ENCODE measurements at regions of chr11 and their contacts with region 1.

Region 1: DNA sequence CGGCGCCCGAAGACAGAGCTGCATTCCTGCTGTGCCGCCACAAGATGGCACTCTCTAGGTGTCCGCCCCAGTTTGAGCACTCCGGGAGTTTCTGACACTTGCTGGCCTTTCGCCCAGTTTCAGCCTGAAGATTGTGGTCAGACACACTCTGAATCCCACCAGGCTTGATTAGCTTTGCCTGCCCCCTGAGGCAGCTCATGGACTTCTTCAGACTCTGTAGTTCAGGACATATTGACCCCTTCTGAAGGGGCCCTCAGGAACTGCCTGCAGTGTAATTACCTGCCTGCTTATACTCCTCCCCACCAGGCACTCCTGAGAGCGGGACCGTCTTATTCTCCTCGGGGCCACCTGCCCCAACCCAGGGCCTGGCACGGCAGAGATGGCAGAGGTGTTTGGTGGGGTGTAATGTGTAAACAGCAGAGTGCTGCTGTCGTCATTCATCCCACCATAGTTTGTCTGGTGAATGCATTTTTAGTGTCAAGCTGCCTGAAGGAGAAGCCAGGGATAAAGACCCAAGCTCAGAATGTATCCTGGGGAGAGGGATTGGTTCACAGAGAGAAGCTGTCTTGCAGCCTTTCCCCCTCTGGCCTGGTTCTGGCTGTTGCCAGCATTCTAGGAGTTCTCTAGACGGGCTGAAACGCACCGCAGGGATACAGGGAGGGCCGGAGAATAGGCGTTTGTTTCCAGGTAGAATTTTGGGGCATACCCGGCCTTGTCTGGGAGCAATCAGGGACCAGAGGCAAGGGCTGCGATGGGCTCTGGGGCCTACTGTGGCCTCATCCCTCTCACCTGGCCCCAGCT is 46.4 kb downstream of the EIF3F start:
- DNase-seq: peak; percentile 87
- CTCF ChIP-seq: peak; percentile 85

Region 2: DNA sequence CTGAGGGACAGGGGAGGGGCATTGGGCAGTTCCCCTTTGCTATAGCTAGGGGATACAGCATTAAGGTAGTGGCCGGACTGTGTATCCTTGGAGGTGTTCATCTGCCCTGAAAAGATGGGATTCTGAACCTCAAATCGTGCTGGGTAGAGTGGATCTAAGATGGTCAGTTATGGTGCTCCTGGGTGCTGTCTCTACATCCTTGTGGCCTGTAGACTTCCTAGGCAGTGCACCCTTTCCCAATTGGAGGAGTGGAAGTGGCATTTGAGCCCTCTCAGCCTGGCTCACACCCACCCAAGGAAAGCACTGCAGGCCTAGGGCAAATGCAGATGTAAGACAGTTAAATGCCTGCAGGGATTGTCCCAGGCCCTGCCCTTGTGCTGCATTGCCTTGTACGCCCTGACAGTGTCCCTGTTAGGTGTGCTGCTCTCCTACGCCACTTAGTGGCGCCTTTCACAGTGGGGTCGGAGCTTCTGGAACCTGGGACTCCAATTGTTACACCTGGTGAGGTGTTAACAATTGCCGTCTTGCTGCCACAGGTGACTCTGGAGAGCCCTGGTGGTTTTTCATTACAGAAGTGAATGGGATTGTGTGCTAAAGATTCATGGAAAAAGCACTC is 484.7 kb before region 1 on chr11:
- CTCF ChIA-PET with region 1: no interaction called
- POLR2A ChIA-PET with region 1: no interaction called
- DNase-seq: peak; percentile 58
- CTCF ChIP-seq: peak; percentile 71

Region 3: DNA sequence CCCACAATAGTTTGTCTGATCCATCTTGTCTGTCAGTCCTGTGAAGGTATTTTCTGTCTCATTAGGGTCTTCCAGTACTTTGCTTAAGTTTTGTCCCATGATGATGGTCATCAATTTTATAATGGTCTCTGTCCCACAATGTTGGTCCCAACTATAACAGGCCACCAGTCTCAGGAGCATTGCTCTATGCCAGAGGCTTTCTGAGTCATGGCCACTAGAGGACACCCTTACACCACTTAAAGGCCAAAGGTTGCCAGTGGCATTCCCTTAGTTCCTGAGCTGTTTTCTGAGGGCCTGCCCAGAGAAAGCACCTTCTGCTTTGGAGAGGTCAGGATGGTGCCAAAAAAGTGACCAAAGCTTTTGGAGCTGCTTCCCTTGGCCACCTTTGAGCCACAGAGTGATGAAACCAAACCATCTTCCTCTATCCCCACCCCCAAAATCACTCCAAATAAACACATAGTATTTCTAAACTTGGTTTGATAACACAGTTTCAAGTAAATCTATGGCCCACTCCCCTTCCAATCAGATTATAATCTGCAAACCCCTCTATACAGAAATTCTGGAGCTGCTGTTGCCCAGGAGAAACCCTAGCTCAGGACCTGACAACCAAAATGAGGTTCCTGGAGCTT is 27.0 kb before region 1 on chr11:
- CTCF ChIA-PET with region 1: interaction called, 51 read pairs
- POLR2A ChIA-PET with region 1: no interaction called
- DNase-seq: peak; percentile 58
- CTCF ChIP-seq: peak; percentile 88

Region 4: DNA sequence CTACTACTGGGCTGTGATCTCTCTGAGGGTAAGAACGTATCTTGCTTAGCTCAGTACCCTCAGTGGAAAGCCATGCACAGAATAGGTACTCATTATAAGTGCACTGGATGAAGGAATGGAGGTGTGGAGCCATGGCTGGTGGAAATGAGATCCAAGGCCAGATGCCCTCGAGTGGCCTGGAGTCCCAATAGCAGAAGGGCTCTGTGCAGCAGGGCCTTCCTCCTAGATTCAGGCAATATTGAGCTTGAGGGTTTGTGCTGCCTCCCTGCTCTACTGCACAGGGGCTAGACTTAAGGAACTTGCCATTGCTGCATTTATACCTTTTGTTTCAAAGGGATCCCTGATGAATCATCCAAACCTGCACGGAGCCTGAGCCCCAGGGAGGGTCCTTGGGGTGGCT is 13.9 kb after region 1 on chr11:
- CTCF ChIA-PET with region 1: interaction called, 15 read pairs
- POLR2A ChIA-PET with region 1: no interaction called
- DNase-seq: no peak
- CTCF ChIP-seq: no peak

Region 5: DNA sequence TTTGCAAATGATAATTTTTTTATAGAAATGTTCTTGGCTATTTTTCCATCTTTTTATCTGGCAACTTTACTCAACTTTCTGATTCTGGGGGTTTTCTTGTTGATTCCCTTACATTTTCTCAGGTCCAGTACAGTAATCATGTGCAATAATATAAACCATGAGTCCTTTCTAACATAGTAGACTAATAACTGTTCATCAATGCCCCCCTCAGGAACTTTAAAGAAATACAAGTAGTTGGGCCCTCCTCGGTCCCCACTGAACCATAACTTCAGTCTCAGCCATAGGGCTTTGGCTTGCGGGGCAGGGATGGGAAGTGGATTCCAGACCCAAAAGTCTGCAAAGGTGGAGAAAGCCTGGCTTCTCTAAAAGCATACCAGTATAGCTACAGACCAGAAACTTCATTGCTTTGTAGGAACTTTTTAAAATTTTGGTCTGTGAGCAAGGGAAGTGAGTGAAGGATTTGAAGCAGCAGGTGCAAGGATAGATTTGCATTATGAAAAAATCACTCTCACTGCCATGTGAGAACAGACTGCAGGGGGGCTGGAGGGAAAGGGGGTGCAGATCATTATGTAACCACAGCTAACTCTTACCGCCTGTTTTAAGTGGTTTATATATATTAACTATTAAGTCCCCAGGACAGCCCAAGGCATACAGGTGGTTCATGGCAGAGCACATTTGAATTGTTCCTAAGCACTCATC is 37.1 kb after region 1 on chr11:
- CTCF ChIA-PET with region 1: interaction called, 18 read pairs
- POLR2A ChIA-PET with region 1: no interaction called
- DNase-seq: peak; percentile 59
- CTCF ChIP-seq: peak; percentile 30

Region 6: DNA sequence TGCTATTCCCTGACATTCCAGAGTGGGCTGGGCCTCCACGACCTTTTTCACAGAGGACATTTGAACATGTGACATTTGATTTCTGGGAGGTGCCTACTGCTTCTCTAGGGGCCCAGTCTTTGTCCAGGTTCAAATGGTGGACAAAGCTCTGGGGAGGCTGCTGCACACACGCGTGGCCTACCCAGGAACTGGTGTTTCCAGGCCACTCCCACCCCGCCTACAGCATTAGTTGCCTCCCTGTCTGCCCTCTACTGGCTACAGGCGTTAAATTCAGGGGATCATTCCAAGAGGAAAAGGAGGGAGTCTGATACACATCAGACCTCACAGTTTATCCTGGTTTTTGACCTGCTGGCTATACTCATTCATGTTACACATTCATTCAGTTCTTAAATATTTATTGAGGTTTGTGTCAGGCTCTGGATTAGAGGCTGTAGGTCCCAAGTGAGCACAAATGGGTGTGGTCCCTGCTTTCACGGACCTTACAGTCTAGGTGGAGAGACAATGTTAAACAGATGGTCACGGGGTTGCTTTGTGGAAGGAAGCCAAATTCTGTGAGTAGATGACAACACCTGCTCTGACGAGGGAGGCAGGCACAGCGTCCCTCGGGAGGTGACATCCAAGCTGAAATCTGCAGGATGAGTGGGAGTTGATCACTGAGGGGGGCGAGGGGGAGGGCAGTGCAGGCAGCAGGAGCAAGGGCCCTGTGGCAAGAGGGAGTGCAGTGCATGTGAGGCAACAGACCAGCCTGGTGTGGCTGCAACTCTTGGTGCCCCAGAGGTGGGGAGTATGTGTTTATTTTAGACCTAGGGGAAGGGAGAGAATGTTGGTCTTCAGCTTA is 59.3 kb after region 1 on chr11:
- CTCF ChIA-PET with region 1: interaction called, 275 read pairs
- POLR2A ChIA-PET with region 1: no interaction called
- DNase-seq: peak; percentile 82
- CTCF ChIP-seq: peak; percentile 54